Gastrocnemius medialis (tissue), 4 donors: ENCODE measurements at regions of chr1 and their contacts with region 1.

Region 1: DNA sequence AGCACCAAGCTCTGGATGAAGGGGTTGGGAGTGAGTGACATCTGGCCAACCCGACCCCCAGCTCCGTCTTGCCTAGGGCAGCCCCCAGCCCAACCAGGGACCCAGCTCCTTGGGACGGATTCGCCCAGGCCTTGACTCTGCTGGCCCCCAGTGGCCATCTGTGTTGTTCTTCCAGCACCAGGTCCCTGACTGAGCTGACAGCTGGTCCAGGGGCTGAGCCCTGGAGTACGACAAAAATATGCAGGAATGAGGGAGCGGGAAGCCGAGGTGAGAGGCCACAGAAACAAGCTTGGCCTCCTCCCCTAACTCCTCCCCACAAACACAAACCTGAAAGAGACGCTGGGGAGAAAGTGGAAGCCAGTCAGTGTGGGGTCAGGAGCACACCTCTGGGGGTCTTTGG is 55.0 kb upstream of the PAX7 start:
- DNase-seq: no peak
- ATAC-seq: no peak
- H3K4me3 ChIP-seq: no peak overlapping the region
- H3K27ac ChIP-seq: no peak overlapping the region
- H3K4me1 ChIP-seq: no peaks in the 10 kb centered on the region
- H3K27me3 ChIP-seq: peaks cover 0 to 7% (median 6%) of the 10 kb centered on the region in 3 donors
- CTCF ChIP-seq: peak in 4 of 5 experiments; percentile 29 to 60 (median 53)
- POLR2A ChIP-seq: no peak

Region 2: GRCh38 chr1:17494114-17494729 is 1081.4 kb before region 1 on chr1:
- in situ Hi-C with region 1: no loop called
- intact Hi-C with region 1: loop called (anchors 10 kb)
- DNase-seq: peak; percentile 29 to 48
- ATAC-seq: peak; percentile 81 to 83
- H3K4me3 ChIP-seq: no peak overlapping the region
- H3K27ac ChIP-seq: no peak overlapping the region
- H3K4me1 ChIP-seq: no peaks in the 10 kb centered on the region
- H3K27me3 ChIP-seq: no peaks in the 10 kb centered on the region
- CTCF ChIP-seq: peak; percentile 70 to 89 (median 82)
- POLR2A ChIP-seq: no peak

Region 3: GRCh38 chr1:17661546-17662157 is 914.0 kb before region 1 on chr1:
- in situ Hi-C with region 1: no loop called
- intact Hi-C with region 1: loop called (anchors 5 kb)
- DNase-seq: peak in 1 of 2 donors; percentile 55
- ATAC-seq: peak in 1 of 2 donors; percentile 52
- H3K4me3 ChIP-seq: no peak overlapping the region
- H3K27ac ChIP-seq: no peak overlapping the region
- H3K4me1 ChIP-seq: no peaks in the 10 kb centered on the region
- H3K27me3 ChIP-seq: no peaks in the 10 kb centered on the region
- CTCF ChIP-seq: peak; percentile 60 to 87 (median 80)
- POLR2A ChIP-seq: no peak